ENCODE measurements at regions of chr19 and their contacts with region 1.

Region 1: DNA sequence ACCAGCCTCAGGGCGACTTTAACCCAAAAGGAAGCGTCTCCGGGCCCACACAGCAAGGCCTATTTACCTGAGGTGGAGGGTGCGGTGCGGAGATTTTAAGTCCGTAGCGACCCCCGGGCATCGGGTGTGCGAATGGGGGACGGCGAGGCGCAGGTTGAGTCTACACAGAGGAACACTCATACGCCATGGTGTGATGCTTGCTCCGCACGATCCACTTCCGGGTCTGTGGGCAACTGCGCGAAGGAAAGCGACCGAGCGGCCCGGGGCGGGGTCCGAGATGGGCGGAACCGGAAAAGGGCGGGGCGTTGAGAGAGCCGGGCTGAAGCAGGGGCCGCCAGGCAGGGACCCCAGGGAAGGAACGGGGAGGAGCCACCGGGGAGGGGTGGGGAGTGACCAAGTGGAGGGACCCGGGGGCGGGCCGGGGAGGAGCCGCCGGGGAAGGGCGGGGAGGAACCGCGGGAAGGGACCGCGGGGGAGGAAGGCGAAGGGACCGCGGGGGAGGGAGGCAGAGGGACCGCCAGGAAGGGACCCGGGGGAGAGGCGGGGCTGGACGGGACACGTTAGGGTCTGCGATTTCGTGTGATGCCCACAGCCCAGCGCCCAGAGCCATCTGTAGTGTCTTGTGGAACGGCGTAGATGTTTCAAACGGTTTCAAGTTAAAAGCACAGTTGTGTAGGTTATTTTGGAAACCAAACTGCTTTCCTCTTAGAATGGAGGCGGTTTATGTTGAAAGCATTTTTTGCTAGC is at the start of gene ZNF160:
- DNase-seq: peak; percentile 95 to 99 (median 97)
- ATAC-seq: peak; percentile 99
- H3K4me3 ChIP-seq: peak within 1 kb of the TSS; percentile 99
- H3K4me3 Mint-ChIP-seq: peak within 1 kb of the TSS; percentile 85 to 97 (median 88)
- H3K27ac ChIP-seq: peak within 1 kb of the TSS; percentile 89
- H3K27ac Mint-ChIP-seq: peak within 1 kb of the TSS; percentile 79 to 98 (median 94)
- H3K4me1 ChIP-seq: peaks cover 13 to 15% of the 10 kb centered on the region in 2 donors
- H3K4me1 Mint-ChIP-seq: peaks cover 22 to 37% (median 34%) of the 10 kb centered on the region in 7 donors
- H3K27me3 ChIP-seq: no peaks in the 10 kb centered on the region
- H3K27me3 Mint-ChIP-seq: no peaks in the 10 kb centered on the region
- total RNA-seq, gene ZNF160: 39.1 to 75.3 (median 52.9) TPM

Region 2: GRCh38 chr19:52397310-52398080 is 705.9 kb before region 1 on chr19 and contains the start of gene ZNF528:
- CTCF ChIA-PET with region 1: no interaction called
- POLR2A ChIA-PET with region 1: interaction called, 3 read pairs
- intact Hi-C with region 1: loop called in 1 of 2 experiments (anchors 1 kb)
- DNase-seq: peak; percentile 78 to 95 (median 87)
- ATAC-seq: peak; percentile 98
- H3K4me3 ChIP-seq: peak within 1 kb of the TSS; percentile 94
- H3K4me3 Mint-ChIP-seq: peak within 1 kb of the TSS; percentile 80 to 93 (median 90)
- H3K27ac ChIP-seq: peak within 1 kb of the TSS; percentile 65
- H3K27ac Mint-ChIP-seq: peak within 1 kb of the TSS; percentile 88 to 96 (median 91)
- H3K4me1 ChIP-seq: peaks cover 5 to 12% of the 10 kb centered on the region in 2 donors
- H3K4me1 Mint-ChIP-seq: peaks cover 15 to 34% (median 25%) of the 10 kb centered on the region in 7 donors
- H3K27me3 ChIP-seq: no peaks in the 10 kb centered on the region
- H3K27me3 Mint-ChIP-seq: no peaks in the 10 kb centered on the region
- total RNA-seq, gene ZNF528: 10.6 to 47.3 (median 23.0) TPM

Region 3: DNA sequence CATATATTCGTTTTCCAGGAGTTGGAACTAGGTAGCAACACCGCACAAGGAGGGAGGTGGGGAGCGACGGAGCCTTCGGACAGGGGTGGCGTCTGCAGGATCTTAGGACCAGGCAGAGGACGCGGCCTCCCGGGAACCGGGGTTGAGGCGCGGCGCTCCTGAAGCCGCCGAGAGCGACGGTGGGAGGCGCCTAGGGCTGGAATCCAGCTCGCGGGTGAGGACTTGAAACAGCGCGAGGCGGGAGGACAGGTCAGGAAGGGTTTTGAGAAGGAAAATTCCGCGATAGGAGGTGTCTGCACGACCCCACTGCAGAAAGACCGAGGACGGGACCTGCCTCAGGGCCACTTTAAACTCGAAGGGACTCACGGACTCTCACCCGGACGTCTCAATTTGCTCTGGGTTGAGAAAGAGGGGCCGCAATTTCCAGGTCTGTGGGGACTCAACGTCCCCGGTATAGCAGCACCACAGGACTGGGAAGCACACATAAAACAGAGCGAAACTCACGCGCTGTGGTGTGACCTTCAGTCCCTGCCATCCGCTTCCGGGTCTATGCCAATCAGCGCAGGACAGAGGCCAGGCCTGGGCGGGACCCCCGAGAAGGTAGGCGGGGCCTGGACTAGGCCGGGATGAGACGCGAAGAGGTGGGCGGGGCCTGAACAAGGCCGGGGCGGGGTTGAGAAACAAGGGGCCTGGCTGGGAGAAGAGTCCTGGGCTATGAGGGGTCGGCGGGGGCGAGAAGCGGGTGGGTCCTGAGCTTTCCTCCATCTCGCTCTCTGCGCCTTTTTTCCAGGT is 206.0 kb before region 1 on chr19 and contains the start of gene ZNF320:
- CTCF ChIA-PET with region 1: no interaction called
- POLR2A ChIA-PET with region 1: interaction called, 4 read pairs
- intact Hi-C with region 1: loop called (anchors 1 kb)
- DNase-seq: peak; percentile 78 to 92 (median 89)
- ATAC-seq: peak; percentile 100
- H3K4me3 ChIP-seq: peak within 1 kb of the TSS; percentile 96
- H3K4me3 Mint-ChIP-seq: peak within 1 kb of the TSS; percentile 88 to 96 (median 92)
- H3K27ac ChIP-seq: peak within 1 kb of the TSS; percentile 79
- H3K27ac Mint-ChIP-seq: peak within 1 kb of the TSS; percentile 19 to 94 (median 93)
- H3K4me1 ChIP-seq: peaks cover 4 to 5% of the 10 kb centered on the region in 2 donors
- H3K4me1 Mint-ChIP-seq: peaks cover 5 to 33% (median 17%) of the 10 kb centered on the region in 7 donors
- H3K27me3 ChIP-seq: no peaks in the 10 kb centered on the region
- H3K27me3 Mint-ChIP-seq: no peaks in the 10 kb centered on the region
- total RNA-seq, gene ZNF320: 4.5 to 13.4 (median 11.6) TPM

Region 4: GRCh38 chr19:53158119-53158656 is 54.8 kb after region 1 on chr19:
- CTCF ChIA-PET with region 1: no interaction called
- POLR2A ChIA-PET with region 1: interaction called, 3 read pairs
- intact Hi-C with region 1: loop called (anchors 1 kb)
- DNase-seq: peak in 5 of 9 donors; percentile 9 to 41 (median 26)
- ATAC-seq: peak; percentile 35
- H3K4me3 ChIP-seq: peak overlapping the region; percentile 97
- H3K4me3 Mint-ChIP-seq: peak overlapping the region; percentile 65 to 91 (median 86)
- H3K27ac ChIP-seq: peak overlapping the region; percentile 70
- H3K27ac Mint-ChIP-seq: peak overlapping the region; percentile 44 to 90 (median 85)
- H3K4me1 ChIP-seq: peaks cover 4 to 7% of the 10 kb centered on the region in 2 donors
- H3K4me1 Mint-ChIP-seq: peaks cover 12 to 32% (median 27%) of the 10 kb centered on the region in 7 donors
- H3K27me3 ChIP-seq: no peaks in the 10 kb centered on the region
- H3K27me3 Mint-ChIP-seq: no peaks in the 10 kb centered on the region

Region 5: GRCh38 chr19:53394974-53395839 is 291.8 kb after region 1 on chr19 and contains the start of gene ZNF765:
- CTCF ChIA-PET with region 1: no interaction called
- POLR2A ChIA-PET with region 1: no interaction called
- intact Hi-C with region 1: loop called (anchors 1 to 5 kb)
- DNase-seq: peak; percentile 92 to 99 (median 97)
- ATAC-seq: peak; percentile 100
- H3K4me3 ChIP-seq: peak within 1 kb of the TSS; percentile 97
- H3K4me3 Mint-ChIP-seq: peak within 1 kb of the TSS; percentile 88 to 97 (median 93)
- H3K27ac ChIP-seq: peak within 1 kb of the TSS; percentile 82
- H3K27ac Mint-ChIP-seq: peak within 1 kb of the TSS; percentile 89 to 97 (median 94)
- H3K4me1 ChIP-seq: peaks cover 5 to 8% of the 10 kb centered on the region in 2 donors
- H3K4me1 Mint-ChIP-seq: peaks cover 13 to 40% (median 31%) of the 10 kb centered on the region in 7 donors
- H3K27me3 ChIP-seq: no peaks in the 10 kb centered on the region
- H3K27me3 Mint-ChIP-seq: no peaks in the 10 kb centered on the region
- total RNA-seq, gene ZNF765: 5.1 to 19.5 (median 11.4) TPM

Region 6: DNA sequence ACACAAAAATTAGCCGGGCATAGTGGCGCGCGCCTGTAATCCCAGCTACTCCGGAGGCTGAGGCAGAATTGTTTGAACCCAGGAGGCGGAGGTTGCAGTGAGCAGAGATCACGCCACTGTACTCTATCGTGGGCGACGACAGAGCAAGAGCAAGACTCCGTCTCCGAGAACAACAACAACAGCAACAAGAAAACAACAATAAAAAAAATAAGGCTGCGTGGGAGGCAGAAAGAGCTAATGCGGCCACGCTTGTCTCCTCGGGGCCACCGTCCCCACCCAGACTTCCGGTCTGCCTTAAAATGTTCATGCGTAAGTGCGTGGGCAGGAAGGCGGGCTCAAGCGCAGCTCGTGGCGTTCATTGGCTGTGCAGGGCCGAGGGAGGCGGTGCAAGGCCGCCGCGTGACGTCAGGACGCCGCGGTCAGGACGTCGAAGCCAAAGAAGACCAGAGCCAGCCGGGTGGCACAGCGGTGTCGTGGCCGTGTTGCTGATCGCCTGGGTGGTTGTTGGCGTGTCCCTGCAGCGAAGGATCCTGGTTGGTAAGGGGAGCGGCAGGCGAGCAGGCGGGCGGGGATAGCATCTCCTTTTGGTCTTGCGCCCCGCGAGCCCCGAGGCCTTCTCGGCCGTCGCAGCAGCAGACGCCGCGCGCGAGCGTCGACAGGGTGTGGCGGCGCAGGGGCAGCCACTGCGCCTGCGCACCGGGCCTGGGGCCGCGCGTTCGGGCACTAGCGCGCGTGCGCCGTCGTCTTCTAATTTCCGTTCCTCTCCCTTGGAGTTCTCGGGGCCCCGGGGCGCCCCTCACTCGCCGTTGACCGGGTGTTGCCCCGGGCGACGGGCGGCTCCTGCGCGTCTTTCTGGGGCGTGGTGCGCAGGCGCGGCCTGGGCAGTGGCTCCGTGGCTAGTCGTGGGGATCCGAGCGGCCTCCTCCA is 1345.7 kb after region 1 on chr19 and contains the start of gene LENG8:
- CTCF ChIA-PET with region 1: no interaction called
- POLR2A ChIA-PET with region 1: no interaction called
- intact Hi-C with region 1: loop called in 1 of 2 experiments (anchors 5 kb)
- DNase-seq: peak; percentile 95 to 99 (median 98)
- ATAC-seq: peak; percentile 94
- H3K4me3 ChIP-seq: peak within 1 kb of the TSS; percentile 85
- H3K4me3 Mint-ChIP-seq: peak within 1 kb of the TSS; percentile 93 to 99 (median 97)
- H3K27ac ChIP-seq: peak within 1 kb of the TSS; percentile 94
- H3K27ac Mint-ChIP-seq: peak within 1 kb of the TSS; percentile 97 to 100 (median 100)
- H3K4me1 ChIP-seq: peaks cover 19 to 39% of the 10 kb centered on the region in 2 donors
- H3K4me1 Mint-ChIP-seq: peaks cover 31 to 61% (median 54%) of the 10 kb centered on the region in 7 donors
- H3K27me3 ChIP-seq: no peaks in the 10 kb centered on the region
- H3K27me3 Mint-ChIP-seq: peaks cover 0 to 3% (median 0%) of the 10 kb centered on the region in 5 donors
- total RNA-seq, gene LENG8: 238 to 685 (median 503) TPM